WTC11 (cell line): ENCODE measurements at regions of chr10 and their contacts with region 1.

Region 1: GRCh38 chr10:48656241-48656913 is 28.3 kb upstream of the WDFY4 start:
- DNase-seq: peak; percentile 86
- ATAC-seq: peak; percentile 77
- H3K4me3 Mint-ChIP-seq: peak overlapping the region; percentile 66
- H3K27ac Mint-ChIP-seq: no peak overlapping the region
- H3K4me1 Mint-ChIP-seq: peaks cover 16% of the 10 kb centered on the region
- H3K27me3 Mint-ChIP-seq: peaks cover 30% of the 10 kb centered on the region
- CTCF ChIP-seq: peak; percentile 90

Region 2: GRCh38 chr10:48363617-48364355 is 292.6 kb before region 1 on chr10:
- CTCF ChIA-PET with region 1: interaction called, 40 read pairs
- POLR2A ChIA-PET with region 1: no interaction called
- DNase-seq: no peak
- ATAC-seq: peak; percentile 41
- H3K4me3 Mint-ChIP-seq: no peak overlapping the region
- H3K27ac Mint-ChIP-seq: no peak overlapping the region
- H3K4me1 Mint-ChIP-seq: peaks cover 17% of the 10 kb centered on the region
- H3K27me3 Mint-ChIP-seq: no peaks in the 10 kb centered on the region
- CTCF ChIP-seq: no peak

Region 3: DNA sequence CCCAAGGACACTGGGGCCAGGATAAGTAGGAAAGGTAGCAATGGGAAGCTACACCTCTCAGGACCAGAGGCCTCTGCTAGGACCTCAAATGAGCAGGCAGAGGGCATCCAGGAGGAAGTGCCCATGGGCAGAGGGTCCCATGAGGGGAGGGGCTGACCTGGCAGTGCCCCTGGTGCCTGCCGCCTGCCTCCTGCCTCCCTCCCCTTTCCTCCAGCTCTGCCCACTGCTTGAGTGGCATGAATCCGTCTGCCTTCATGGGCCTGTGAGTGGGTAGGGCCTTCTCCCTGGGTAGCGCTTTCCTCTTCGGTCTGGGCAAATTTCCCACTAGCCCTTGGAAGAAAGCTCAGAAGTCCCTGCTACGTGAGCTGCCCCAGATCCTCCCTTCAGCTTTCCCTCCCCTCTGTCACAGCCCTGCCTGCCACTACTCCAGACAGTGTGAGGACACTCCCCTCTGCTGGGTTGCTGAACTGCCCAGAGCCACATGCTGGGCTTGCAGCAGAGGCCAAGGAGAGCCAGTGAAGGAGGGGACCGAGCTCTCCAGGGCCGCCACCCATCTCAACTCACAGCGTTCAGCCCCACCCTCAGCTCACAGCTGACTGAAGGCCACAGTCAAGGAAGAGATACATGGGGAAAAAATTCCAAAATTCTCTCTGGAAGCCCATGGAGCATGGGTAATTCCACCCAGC is 192.9 kb before region 1 on chr10:
- CTCF ChIA-PET with region 1: interaction called, 11 read pairs
- POLR2A ChIA-PET with region 1: no interaction called
- DNase-seq: no peak
- ATAC-seq: peak; percentile 25
- H3K4me3 Mint-ChIP-seq: no peak overlapping the region
- H3K27ac Mint-ChIP-seq: peak overlapping the region; percentile 68; the same call in 1 of the 2 replicates
- H3K4me1 Mint-ChIP-seq: peaks cover 21% of the 10 kb centered on the region
- H3K27me3 Mint-ChIP-seq: peaks cover 15% of the 10 kb centered on the region
- CTCF ChIP-seq: no peak

Region 4: GRCh38 chr10:48533951-48534720 is 122.2 kb before region 1 on chr10:
- CTCF ChIA-PET with region 1: interaction called, 32 read pairs
- POLR2A ChIA-PET with region 1: no interaction called
- DNase-seq: peak; percentile 46
- ATAC-seq: peak; percentile 38
- H3K4me3 Mint-ChIP-seq: no peak overlapping the region
- H3K27ac Mint-ChIP-seq: peak overlapping the region; percentile 80
- H3K4me1 Mint-ChIP-seq: peaks cover 54% of the 10 kb centered on the region
- H3K27me3 Mint-ChIP-seq: no peaks in the 10 kb centered on the region; the same call in 1 of the 2 replicates
- CTCF ChIP-seq: no peak

Region 5: GRCh38 chr10:48594803-48595538 is 61.4 kb before region 1 on chr10:
- CTCF ChIA-PET with region 1: interaction called, 21 read pairs
- POLR2A ChIA-PET with region 1: no interaction called
- DNase-seq: peak; percentile 40
- ATAC-seq: peak; percentile 54
- H3K4me3 Mint-ChIP-seq: peak overlapping the region; percentile 11; the same call in 1 of the 2 replicates
- H3K27ac Mint-ChIP-seq: no peak overlapping the region; the same call in 1 of the 2 replicates
- H3K4me1 Mint-ChIP-seq: peaks cover 23% of the 10 kb centered on the region
- H3K27me3 Mint-ChIP-seq: peaks cover 3% of the 10 kb centered on the region
- CTCF ChIP-seq: no peak

Region 6: GRCh38 chr10:48670978-48671913 is 14.9 kb after region 1 on chr10:
- CTCF ChIA-PET with region 1: interaction called, 25 read pairs
- POLR2A ChIA-PET with region 1: no interaction called
- DNase-seq: peak; percentile 54
- ATAC-seq: peak; percentile 96
- H3K4me3 Mint-ChIP-seq: peak overlapping the region; percentile 18; the same call in 1 of the 2 replicates
- H3K27ac Mint-ChIP-seq: no peak overlapping the region
- H3K4me1 Mint-ChIP-seq: peaks cover 5% of the 10 kb centered on the region
- H3K27me3 Mint-ChIP-seq: peaks cover 5% of the 10 kb centered on the region; the same call in 1 of the 2 replicates
- CTCF ChIP-seq: no peak

Region 7: DNA sequence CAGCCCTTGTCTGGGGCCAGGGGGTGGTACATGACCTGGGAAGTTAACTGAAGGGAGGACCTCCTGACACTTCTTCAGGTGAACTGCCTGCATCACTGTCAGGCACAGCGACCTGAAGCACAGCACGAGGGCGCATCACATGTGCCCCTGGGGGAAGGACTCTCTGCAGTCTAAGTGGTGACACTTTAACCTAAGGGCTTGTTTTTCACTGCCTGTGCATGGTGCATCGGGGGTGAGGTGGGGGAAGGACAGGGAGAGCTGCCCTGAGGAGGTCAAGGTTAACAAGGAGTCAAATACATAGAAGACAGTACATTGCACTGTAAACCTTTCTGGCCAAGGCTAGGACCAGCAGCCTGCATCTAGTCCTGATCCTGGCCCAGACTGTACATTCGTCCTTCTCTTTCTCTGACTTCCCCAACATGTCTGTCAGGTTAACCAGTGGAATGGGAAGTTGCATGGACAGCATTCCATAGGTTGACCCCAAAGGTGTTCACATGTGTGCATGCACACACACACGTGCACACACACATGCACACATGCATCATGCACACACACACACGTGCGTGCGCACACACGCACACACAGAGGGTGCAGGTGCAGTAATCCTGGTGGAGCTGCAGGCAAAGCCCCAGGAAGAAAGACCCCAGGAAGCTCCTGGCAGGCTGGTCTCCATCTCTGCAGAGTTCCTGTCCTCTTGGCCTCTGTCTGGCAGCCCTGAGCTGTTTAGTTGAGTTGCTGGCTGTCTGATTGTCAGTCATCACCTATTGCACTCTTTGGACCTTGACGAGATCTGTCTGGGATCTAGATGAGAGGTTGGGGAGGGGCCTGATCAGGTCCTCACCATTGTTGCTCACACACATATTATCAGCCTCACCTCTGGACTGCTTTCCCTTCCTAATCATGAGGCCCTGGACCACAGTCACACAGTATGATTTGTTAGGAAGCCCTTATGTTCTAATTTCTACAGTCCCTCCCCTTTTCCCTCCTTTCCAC is 66.1 kb after region 1 on chr10:
- CTCF ChIA-PET with region 1: no interaction called
- POLR2A ChIA-PET with region 1: no interaction called
- DNase-seq: no peak
- ATAC-seq: no peak
- H3K4me3 Mint-ChIP-seq: no peak overlapping the region
- H3K27ac Mint-ChIP-seq: no peak overlapping the region
- H3K4me1 Mint-ChIP-seq: no peaks in the 10 kb centered on the region
- H3K27me3 Mint-ChIP-seq: no peaks in the 10 kb centered on the region
- CTCF ChIP-seq: no peak

Region 8: GRCh38 chr10:49164559-49165188 is 508.3 kb after region 1 on chr10:
- CTCF ChIA-PET with region 1: interaction called, 11 read pairs
- POLR2A ChIA-PET with region 1: no interaction called
- DNase-seq: peak; percentile 77
- ATAC-seq: peak; percentile 94
- H3K4me3 Mint-ChIP-seq: no peak overlapping the region
- H3K27ac Mint-ChIP-seq: no peak overlapping the region
- H3K4me1 Mint-ChIP-seq: peaks cover 17% of the 10 kb centered on the region
- H3K27me3 Mint-ChIP-seq: peaks cover 4% of the 10 kb centered on the region; the same call in 1 of the 2 replicates
- CTCF ChIP-seq: peak; percentile 70